CD8-positive, alpha-beta T cell (primary cell): ENCODE measurements at regions of chr19 and their contacts with region 1.

Region 1: DNA sequence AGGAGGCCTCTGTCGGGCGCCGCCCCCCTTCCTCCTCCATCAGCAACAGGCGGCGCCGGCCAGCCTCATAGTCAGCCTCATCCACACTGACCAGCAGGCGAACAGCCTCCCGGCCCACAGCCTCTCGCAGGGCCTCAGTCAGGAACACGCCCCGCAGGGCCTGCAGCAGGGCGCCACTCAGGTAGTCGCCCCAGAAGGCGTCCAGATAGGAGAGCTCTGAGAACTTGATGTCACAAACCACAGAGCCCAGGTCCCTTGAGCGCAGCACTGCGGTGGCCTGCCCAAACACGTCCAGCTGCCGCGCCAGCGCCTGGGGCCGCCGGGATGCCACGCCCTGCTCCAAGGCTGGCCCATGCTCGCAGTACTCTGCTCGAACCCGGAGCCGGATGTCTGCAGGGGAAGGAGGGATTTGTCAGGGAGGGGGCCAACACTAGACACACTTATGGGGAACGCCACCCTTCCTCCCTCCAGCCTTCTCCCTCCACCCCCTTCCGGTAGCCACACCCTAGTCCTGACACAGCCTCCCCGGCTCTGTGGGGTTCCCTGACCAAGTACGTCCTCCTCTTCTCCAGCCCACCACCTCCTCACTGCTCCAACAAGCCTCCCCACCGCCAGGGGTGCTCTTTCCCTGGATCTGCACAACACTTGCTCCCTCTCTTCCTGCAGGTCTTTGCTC is 17.9 kb downstream of the DEDD2 start:
- DNase-seq: peak in 7 of 9 experiments; percentile 36 to 80 (median 64)
- ATAC-seq: peak; percentile 30
- H3K4me3 ChIP-seq: peak overlapping the region; percentile 50 to 59
- H3K4me3 Mint-ChIP-seq: peak overlapping the region; percentile 87
- H3K27ac ChIP-seq: peak overlapping the region; percentile 88 to 93
- H3K27ac Mint-ChIP-seq: peak overlapping the region; percentile 95
- H3K4me1 ChIP-seq: peaks cover 84% of the 10 kb centered on the region
- H3K4me1 Mint-ChIP-seq: peaks cover 81% of the 10 kb centered on the region
- H3K27me3 ChIP-seq: no peaks in the 10 kb centered on the region
- H3K27me3 Mint-ChIP-seq: no peaks in the 10 kb centered on the region
- CTCF ChIP-seq: peak; percentile 29

Region 2: GRCh38 chr19:42023121-42023942 is 176.2 kb before region 1 on chr19:
- CTCF ChIA-PET with region 1: no interaction called
- POLR2A ChIA-PET with region 1: no interaction called
- intact Hi-C with region 1: no loop called
- DNase-seq: peak in 2 of 9 experiments; percentile 4 to 19
- ATAC-seq: no peak
- H3K4me3 ChIP-seq: no peak overlapping the region
- H3K4me3 Mint-ChIP-seq: no peak overlapping the region
- H3K27ac ChIP-seq: no peak overlapping the region
- H3K27ac Mint-ChIP-seq: no peak overlapping the region
- H3K4me1 ChIP-seq: no peaks in the 10 kb centered on the region
- H3K4me1 Mint-ChIP-seq: no peaks in the 10 kb centered on the region
- H3K27me3 ChIP-seq: peaks cover 0 to 2% of the 10 kb centered on the region in 2 experiments
- H3K27me3 Mint-ChIP-seq: peaks cover 15% of the 10 kb centered on the region
- CTCF ChIP-seq: peak; percentile 15

Region 3: GRCh38 chr19:42154471-42155323 is 44.9 kb before region 1 on chr19:
- CTCF ChIA-PET with region 1: no interaction called
- POLR2A ChIA-PET with region 1: no interaction called
- intact Hi-C with region 1: no loop called
- DNase-seq: no peak
- ATAC-seq: peak; percentile 34
- H3K4me3 ChIP-seq: no peak overlapping the region
- H3K4me3 Mint-ChIP-seq: no peak overlapping the region
- H3K27ac ChIP-seq: no peak overlapping the region
- H3K27ac Mint-ChIP-seq: no peak overlapping the region
- H3K4me1 ChIP-seq: peaks cover 13% of the 10 kb centered on the region
- H3K4me1 Mint-ChIP-seq: peaks cover 17% of the 10 kb centered on the region
- H3K27me3 ChIP-seq: no peaks in the 10 kb centered on the region
- H3K27me3 Mint-ChIP-seq: peaks cover 3% of the 10 kb centered on the region
- CTCF ChIP-seq: no peak

Region 4: DNA sequence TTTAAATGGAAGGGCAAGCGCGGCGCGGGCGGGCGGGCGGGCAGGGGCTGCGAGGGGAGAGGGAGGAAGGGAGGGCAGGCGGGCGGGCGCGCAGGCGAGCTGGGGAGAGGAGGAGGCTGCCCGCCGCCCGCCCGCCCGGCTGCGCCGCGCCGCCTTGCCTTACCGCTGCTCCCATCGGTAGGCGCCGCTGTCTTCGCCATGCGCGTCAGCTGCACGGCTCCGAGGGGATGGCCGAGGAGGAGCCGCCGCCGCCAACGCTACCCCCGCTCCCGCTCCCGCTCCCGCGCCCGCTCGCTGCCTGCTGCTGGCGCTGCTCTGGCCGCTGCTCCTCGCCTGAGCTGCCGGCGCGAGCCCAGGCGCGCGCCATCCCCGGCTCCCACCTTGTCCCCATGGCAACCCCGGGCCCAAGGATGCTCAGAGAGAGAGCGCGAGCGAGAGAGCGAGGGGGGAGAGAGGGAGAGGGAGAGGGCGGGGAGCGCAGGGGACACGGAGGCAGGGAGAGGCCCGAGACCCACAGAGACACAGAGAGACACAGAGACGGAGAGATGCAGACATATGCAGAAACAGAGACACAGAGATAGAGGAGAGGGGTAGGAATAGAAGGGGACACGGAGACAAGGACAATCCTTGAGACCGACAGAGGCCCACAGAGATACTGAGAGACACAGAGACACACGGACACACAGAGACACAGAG is 22.4 kb before region 1 on chr19:
- CTCF ChIA-PET with region 1: interaction called, 5 read pairs
- POLR2A ChIA-PET with region 1: no interaction called
- intact Hi-C with region 1: loop called in 1 of 2 experiments (anchors 2 kb)
- DNase-seq: peak; percentile 52 to 90 (median 74)
- ATAC-seq: peak; percentile 95
- H3K4me3 ChIP-seq: peak overlapping the region; percentile 49 to 50
- H3K4me3 Mint-ChIP-seq: no peak overlapping the region
- H3K27ac ChIP-seq: no peak overlapping the region
- H3K27ac Mint-ChIP-seq: no peak overlapping the region
- H3K4me1 ChIP-seq: peaks cover 17% of the 10 kb centered on the region
- H3K4me1 Mint-ChIP-seq: peaks cover 12% of the 10 kb centered on the region
- H3K27me3 ChIP-seq: peaks cover 0 to 22% of the 10 kb centered on the region in 2 experiments
- H3K27me3 Mint-ChIP-seq: peaks cover 27% of the 10 kb centered on the region
- CTCF ChIP-seq: peak; percentile 43

Region 5: DNA sequence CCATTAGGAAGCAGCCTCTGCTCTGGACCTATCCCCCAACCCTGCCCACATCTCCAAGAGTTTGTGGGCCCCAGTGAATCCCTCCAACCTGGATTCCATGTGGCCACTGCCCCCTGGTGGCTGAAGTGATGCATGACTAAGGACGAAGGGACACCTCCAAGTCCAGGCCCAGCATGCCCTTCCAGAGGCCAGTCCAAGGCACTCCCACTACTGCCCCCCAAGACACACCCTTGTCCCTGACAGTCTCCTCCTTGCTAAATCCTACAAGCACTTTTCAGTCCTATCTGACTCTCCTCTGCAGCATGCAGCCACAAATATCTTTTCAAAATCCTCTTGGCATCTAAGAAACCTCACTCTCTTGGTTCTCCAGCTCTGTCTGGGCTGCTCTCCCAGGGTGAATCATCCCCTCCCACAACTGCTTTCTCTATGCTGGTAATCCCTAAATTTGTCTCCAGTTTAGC is 15.1 kb before region 1 on chr19:
- CTCF ChIA-PET with region 1: interaction called, 30 read pairs
- POLR2A ChIA-PET with region 1: interaction called, 7 read pairs
- intact Hi-C with region 1: loop called in 1 of 2 experiments (anchors 1 kb)
- DNase-seq: peak; percentile 35 to 83 (median 74)
- ATAC-seq: peak; percentile 67
- H3K4me3 ChIP-seq: no peak overlapping the region
- H3K4me3 Mint-ChIP-seq: no peak overlapping the region
- H3K27ac ChIP-seq: peak overlapping the region in 1 of 2 experiments; percentile 33
- H3K27ac Mint-ChIP-seq: no peak overlapping the region
- H3K4me1 ChIP-seq: peaks cover 20% of the 10 kb centered on the region
- H3K4me1 Mint-ChIP-seq: peaks cover 41% of the 10 kb centered on the region
- H3K27me3 ChIP-seq: peaks cover 0 to 3% of the 10 kb centered on the region in 2 experiments
- H3K27me3 Mint-ChIP-seq: peaks cover 4% of the 10 kb centered on the region
- CTCF ChIP-seq: peak; percentile 81

Region 6: GRCh38 chr19:42330241-42330711 is 130.7 kb after region 1 on chr19:
- CTCF ChIA-PET with region 1: no interaction called
- POLR2A ChIA-PET with region 1: no interaction called
- intact Hi-C with region 1: no loop called
- DNase-seq: no peak
- ATAC-seq: no peak
- H3K4me3 ChIP-seq: no peak overlapping the region
- H3K4me3 Mint-ChIP-seq: no peak overlapping the region
- H3K27ac ChIP-seq: no peak overlapping the region
- H3K27ac Mint-ChIP-seq: no peak overlapping the region
- H3K4me1 ChIP-seq: peaks cover 6% of the 10 kb centered on the region
- H3K4me1 Mint-ChIP-seq: peaks cover 18% of the 10 kb centered on the region
- H3K27me3 ChIP-seq: no peaks in the 10 kb centered on the region
- H3K27me3 Mint-ChIP-seq: no peaks in the 10 kb centered on the region
- CTCF ChIP-seq: no peak